ENCODE measurements at regions of chr9 and their contacts with region 1.

Region 1: GRCh38 chr9:128249908-128250838 is 25.6 kb downstream of the GOLGA2 start:
- DNase-seq: peak; percentile 87
- H3K4me3 ChIP-seq: peak overlapping the region; percentile 66
- H3K27ac ChIP-seq: peak overlapping the region; percentile 44
- H3K4me1 ChIP-seq: peaks cover 11% of the 10 kb centered on the region
- H3K27me3 ChIP-seq: no peaks in the 10 kb centered on the region
- CTCF ChIP-seq: no peak

Region 2: GRCh38 chr9:128206916-128207910 is 43.0 kb before region 1 on chr9:
- CTCF ChIA-PET with region 1: no interaction called
- POLR2A ChIA-PET with region 1: no interaction called
- intact Hi-C with region 1: loop called (anchors 2 kb)
- DNase-seq: no peak
- H3K4me3 ChIP-seq: no peak overlapping the region
- H3K27ac ChIP-seq: no peak overlapping the region
- H3K4me1 ChIP-seq: peaks cover 3% of the 10 kb centered on the region
- H3K27me3 ChIP-seq: no peaks in the 10 kb centered on the region
- CTCF ChIP-seq: no peak

Region 3: GRCh38 chr9:128225770-128226407 is 24.3 kb before region 1 on chr9:
- CTCF ChIA-PET with region 1: no interaction called
- POLR2A ChIA-PET with region 1: no interaction called
- intact Hi-C with region 1: no loop called
- DNase-seq: no peak
- H3K4me3 ChIP-seq: no peak overlapping the region
- H3K27ac ChIP-seq: no peak overlapping the region
- H3K4me1 ChIP-seq: no peaks in the 10 kb centered on the region
- H3K27me3 ChIP-seq: no peaks in the 10 kb centered on the region
- CTCF ChIP-seq: no peak

Region 4: GRCh38 chr9:128310461-128310860 is 60.3 kb after region 1 on chr9:
- CTCF ChIA-PET with region 1: no interaction called
- POLR2A ChIA-PET with region 1: no interaction called
- intact Hi-C with region 1: no loop called
- DNase-seq: no peak
- H3K4me3 ChIP-seq: no peak overlapping the region
- H3K27ac ChIP-seq: no peak overlapping the region
- H3K4me1 ChIP-seq: no peaks in the 10 kb centered on the region
- H3K27me3 ChIP-seq: no peaks in the 10 kb centered on the region
- CTCF ChIP-seq: no peak